ENCODE measurements at regions of chr12 and their contacts with region 1.

Region 1: GRCh38 chr12:50074936-50075807 is 10.0 kb upstream of the SMARCD1 start:
- DNase-seq: peak in 1 of 2 donors; percentile 91
- H3K4me3 ChIP-seq: no peak overlapping the region
- H3K27ac ChIP-seq: no peak overlapping the region
- H3K4me1 ChIP-seq: no peaks in the 10 kb centered on the region
- H3K27me3 ChIP-seq: no peaks in the 10 kb centered on the region
- CTCF ChIP-seq: peak; percentile 93 to 98 (median 95)

Region 2: DNA sequence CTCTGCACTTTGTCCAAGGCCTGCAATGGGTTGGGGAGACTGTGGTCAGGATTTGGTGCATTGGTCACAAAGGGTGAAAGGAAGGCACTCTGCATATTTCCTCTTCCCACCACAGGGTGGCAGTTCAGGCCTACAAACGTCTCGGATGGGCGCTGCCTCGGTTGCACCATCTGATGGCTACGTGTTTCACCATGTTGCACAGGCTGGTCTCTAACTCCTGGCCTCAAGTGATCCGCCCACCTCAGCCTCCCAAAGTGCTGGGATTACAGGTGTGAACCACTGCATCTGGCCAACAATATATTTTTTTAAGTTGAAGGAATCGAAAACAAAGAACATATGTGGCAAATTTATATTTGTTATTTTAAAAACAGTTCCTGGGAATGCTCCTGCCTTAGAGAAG is 298.8 kb before region 1 on chr12:
- intact Hi-C with region 1: loop called (anchors 5 kb)
- DNase-seq: peak in 1 of 2 donors; percentile 78
- H3K4me3 ChIP-seq: no peak overlapping the region
- H3K27ac ChIP-seq: no peak overlapping the region
- H3K4me1 ChIP-seq: no peaks in the 10 kb centered on the region
- H3K27me3 ChIP-seq: no peaks in the 10 kb centered on the region
- CTCF ChIP-seq: peak; percentile 70 to 83 (median 80)

Region 3: GRCh38 chr12:49838973-49839633 is 236.1 kb before region 1 on chr12:
- intact Hi-C with region 1: no loop called
- DNase-seq: no peak
- H3K4me3 ChIP-seq: no peak overlapping the region
- H3K27ac ChIP-seq: no peak overlapping the region
- H3K4me1 ChIP-seq: peaks cover 0 to 18% of the 10 kb centered on the region in 2 donors
- H3K27me3 ChIP-seq: no peaks in the 10 kb centered on the region
- CTCF ChIP-seq: peak; percentile 45 to 64 (median 56)

Region 4: DNA sequence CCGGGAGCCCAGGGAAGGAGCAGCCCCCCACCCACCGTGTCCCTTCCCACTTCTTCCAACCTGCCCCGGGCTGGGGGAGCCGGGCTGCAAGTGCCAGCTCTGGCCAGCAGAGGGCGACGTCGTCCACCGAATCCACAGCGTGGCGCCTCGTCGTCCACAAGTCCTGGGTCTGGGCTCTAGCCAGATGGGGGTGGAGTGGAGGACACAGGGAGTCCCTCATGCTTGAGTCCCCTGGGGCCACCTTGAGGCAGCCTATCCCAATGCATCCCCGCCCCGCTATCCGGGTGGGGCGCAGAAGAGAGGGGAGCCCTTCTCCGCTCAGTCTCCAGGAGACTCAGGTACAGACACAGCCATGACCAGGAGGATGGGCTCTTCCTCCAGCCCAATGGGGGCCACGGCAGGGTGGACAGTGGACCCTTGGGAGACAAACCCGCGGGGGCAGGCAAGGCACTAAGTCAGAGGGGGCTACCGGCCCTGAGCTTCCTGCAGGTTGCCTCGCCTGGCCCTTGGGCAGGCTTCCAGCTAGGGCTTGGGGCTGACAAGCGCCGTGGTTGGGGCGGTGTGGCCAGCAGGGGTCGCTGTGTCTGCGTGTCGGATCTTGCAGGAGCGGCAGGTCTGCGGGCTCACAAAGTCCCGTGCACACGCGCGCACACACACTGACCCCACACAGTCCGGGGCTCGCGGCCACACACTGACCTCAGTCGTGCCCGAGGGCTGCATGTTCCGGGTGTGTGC is 108.0 kb before region 1 on chr12:
- intact Hi-C with region 1: loop called (anchors 2 kb)
- DNase-seq: peak; percentile 36 to 91
- H3K4me3 ChIP-seq: peak overlapping the region; percentile 44 to 51
- H3K27ac ChIP-seq: no peak overlapping the region
- H3K4me1 ChIP-seq: peaks cover 0 to 17% of the 10 kb centered on the region in 2 donors
- H3K27me3 ChIP-seq: no peaks in the 10 kb centered on the region
- CTCF ChIP-seq: peak; percentile 76 to 95 (median 83)

Region 5: GRCh38 chr12:50006789-50007436 is 68.3 kb before region 1 on chr12:
- intact Hi-C with region 1: no loop called
- DNase-seq: no peak
- H3K4me3 ChIP-seq: no peak overlapping the region
- H3K27ac ChIP-seq: no peak overlapping the region
- H3K4me1 ChIP-seq: no peaks in the 10 kb centered on the region
- H3K27me3 ChIP-seq: no peaks in the 10 kb centered on the region
- CTCF ChIP-seq: no peak

Region 6: GRCh38 chr12:50032639-50033581 is 42.3 kb before region 1 on chr12:
- intact Hi-C with region 1: no loop called
- DNase-seq: peak in 1 of 2 donors; percentile 62
- H3K4me3 ChIP-seq: peak overlapping the region; percentile 12 to 55
- H3K27ac ChIP-seq: no peak overlapping the region
- H3K4me1 ChIP-seq: no peaks in the 10 kb centered on the region
- H3K27me3 ChIP-seq: peaks cover 7% of the 10 kb centered on the region
- CTCF ChIP-seq: no peak

Region 7: GRCh38 chr12:50043854-50044253 is 31.3 kb before region 1 on chr12:
- intact Hi-C with region 1: loop called (anchors 1 kb)
- DNase-seq: no peak
- H3K4me3 ChIP-seq: no peak overlapping the region
- H3K27ac ChIP-seq: no peak overlapping the region
- H3K4me1 ChIP-seq: no peaks in the 10 kb centered on the region
- H3K27me3 ChIP-seq: no peaks in the 10 kb centered on the region
- CTCF ChIP-seq: no peak

Region 8: GRCh38 chr12:50174971-50175715 is 100.0 kb after region 1 on chr12:
- intact Hi-C with region 1: loop called (anchors 1 kb)
- DNase-seq: no peak
- H3K4me3 ChIP-seq: no peak overlapping the region
- H3K27ac ChIP-seq: no peak overlapping the region
- H3K4me1 ChIP-seq: no peaks in the 10 kb centered on the region
- H3K27me3 ChIP-seq: no peaks in the 10 kb centered on the region
- CTCF ChIP-seq: peak; percentile 51 to 73 (median 72)

Region 9: GRCh38 chr12:50211392-50212070 is 136.4 kb after region 1 on chr12:
- intact Hi-C with region 1: no loop called
- DNase-seq: no peak
- H3K4me3 ChIP-seq: no peak overlapping the region
- H3K27ac ChIP-seq: peak overlapping the region in 1 of 2 donors; percentile 28
- H3K4me1 ChIP-seq: peaks cover 0 to 18% of the 10 kb centered on the region in 2 donors
- H3K27me3 ChIP-seq: no peaks in the 10 kb centered on the region
- CTCF ChIP-seq: no peak

Region 10: DNA sequence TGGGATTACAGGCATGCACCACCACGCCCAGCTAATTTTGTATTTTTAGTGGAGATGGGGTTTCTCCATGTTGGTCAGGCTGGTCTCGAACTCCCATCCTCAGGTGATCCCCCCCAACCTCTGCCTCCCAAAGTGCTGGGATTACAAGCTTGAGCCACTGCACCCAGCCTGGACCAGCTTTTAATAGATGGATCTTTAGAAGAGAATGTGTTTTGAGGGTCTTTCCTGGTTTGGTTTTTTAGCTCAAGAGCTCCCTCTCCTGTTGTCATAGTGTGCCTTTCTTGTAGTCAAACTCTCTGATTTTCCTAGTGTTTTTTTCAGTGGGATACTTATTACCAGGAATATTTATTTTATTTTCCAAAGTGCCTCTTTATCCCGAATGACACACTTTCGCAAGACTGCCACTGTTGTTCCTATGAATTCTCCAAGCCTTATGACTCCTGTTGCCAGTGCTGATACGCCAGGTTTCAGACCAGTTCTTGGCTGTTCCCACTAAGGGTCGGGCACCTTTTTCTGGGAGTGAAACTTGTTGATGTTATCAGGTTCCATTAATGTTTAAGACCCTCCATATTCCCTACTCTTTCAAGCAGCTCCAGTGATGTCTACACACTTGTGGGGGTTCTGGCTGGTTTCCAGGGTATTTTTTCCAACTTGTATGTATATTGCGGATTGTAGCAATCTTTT is 239.6 kb after region 1 on chr12:
- intact Hi-C with region 1: loop called (anchors 2 kb)
- DNase-seq: no peak
- H3K4me3 ChIP-seq: no peak overlapping the region
- H3K27ac ChIP-seq: no peak overlapping the region
- H3K4me1 ChIP-seq: no peaks in the 10 kb centered on the region
- H3K27me3 ChIP-seq: no peaks in the 10 kb centered on the region
- CTCF ChIP-seq: peak; percentile 27 to 65 (median 47)

Region 11: GRCh38 chr12:50637870-50638481 is 562.8 kb after region 1 on chr12:
- intact Hi-C with region 1: loop called (anchors 5 kb)
- DNase-seq: no peak
- H3K4me3 ChIP-seq: no peak overlapping the region
- H3K27ac ChIP-seq: no peak overlapping the region
- H3K4me1 ChIP-seq: peaks cover 0 to 3% of the 10 kb centered on the region in 2 donors
- H3K27me3 ChIP-seq: no peaks in the 10 kb centered on the region
- CTCF ChIP-seq: peak; percentile 19 to 66 (median 48)